ENCODE measurements at regions of chr19 and their contacts with region 1.

Region 1: DNA sequence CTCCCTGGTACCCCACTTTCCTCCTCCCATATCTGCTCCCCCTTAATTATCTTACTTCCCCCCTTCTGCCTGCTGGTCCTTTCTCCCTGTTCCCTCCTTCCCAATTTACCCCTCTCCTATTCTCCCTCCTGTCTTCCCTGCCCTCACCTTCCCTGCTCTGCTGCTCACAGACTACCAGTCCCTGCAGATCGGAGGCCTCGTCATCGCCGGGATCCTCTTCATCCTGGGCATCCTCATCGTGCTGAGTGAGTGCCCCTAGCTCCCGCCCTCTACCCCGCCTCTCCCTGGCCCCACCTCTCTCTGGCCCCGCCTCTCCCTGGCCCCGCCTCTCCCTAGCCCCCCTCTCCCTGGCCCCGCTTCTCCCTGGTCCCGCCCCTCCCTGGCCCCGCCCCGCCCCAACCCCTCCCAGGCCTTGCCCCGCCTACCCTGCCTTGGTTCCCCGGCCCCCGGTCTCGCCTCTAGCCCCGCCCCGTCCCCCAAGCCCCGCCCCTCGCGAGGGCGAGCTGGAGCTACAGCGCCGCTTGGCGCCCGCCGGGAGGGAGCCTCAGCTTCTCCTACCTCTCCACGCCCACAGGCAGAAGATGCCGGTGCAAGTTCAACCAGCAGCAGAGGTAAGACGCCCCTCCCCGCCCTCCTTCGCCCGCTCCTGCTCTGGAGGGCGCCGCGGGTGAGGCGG is 2.0 kb upstream of the FXYD7 start:
- DNase-seq: peak; percentile 98
- ATAC-seq: peak; percentile 79

Region 2: GRCh38 chr19:35066691-35067563 is 74.2 kb before region 1 on chr19:
- intact Hi-C with region 1: loop called (anchors 5 kb)
- DNase-seq: peak; percentile 95
- ATAC-seq: peak; percentile 94

Region 3: GRCh38 chr19:35269421-35270117 is 128.5 kb after region 1 on chr19:
- intact Hi-C with region 1: loop called (anchors 5 kb)
- DNase-seq: peak; percentile 93
- ATAC-seq: peak; percentile 64

Region 4: DNA sequence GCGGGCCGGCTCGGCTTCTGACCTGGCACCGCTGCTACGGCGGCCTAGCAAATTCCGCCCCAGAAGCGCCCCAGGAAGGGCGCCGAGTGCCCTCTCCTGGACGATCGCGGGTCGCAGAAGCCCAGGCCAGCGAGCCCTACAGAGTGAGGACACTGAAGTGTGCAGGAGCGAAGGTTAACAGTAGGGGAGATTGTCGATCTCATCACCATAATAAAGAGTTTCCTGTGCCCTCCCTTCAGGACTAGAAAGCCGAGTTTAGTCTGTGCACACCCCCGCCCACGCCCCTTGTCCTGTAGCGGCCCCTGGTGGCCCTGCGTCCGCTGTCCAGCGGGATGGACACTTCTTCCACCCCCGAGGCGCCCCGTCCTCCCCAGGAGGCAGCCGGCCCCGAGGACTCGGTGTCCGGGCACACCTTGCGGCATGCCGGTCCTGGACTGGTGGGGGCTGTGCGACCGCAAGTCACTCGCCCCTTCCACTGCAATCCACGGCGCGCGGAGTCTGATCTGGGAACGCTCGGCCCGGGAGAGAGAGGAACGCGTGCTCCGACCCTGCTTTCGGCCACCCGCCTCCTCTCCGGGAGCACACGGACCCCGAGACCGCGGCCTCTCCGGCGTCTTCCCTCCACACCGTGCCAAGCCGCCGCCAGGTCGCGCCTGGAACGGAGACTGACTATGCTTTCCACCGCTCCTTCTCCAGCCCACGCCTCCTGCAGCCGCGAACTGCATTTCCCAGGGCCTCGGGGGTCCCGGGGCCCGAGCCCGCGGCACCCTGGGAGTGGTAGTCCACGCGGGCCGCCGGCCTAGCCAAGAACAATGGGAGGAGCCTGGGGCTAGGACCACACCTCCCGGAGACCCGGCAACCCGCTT is 575.9 kb after region 1 on chr19:
- intact Hi-C with region 1: loop called (anchors 10 kb)
- DNase-seq: peak; percentile 96
- ATAC-seq: peak; percentile 95